IMR-90 (cell line): ENCODE measurements at regions of chr15 and their contacts with region 1.

Region 1: DNA sequence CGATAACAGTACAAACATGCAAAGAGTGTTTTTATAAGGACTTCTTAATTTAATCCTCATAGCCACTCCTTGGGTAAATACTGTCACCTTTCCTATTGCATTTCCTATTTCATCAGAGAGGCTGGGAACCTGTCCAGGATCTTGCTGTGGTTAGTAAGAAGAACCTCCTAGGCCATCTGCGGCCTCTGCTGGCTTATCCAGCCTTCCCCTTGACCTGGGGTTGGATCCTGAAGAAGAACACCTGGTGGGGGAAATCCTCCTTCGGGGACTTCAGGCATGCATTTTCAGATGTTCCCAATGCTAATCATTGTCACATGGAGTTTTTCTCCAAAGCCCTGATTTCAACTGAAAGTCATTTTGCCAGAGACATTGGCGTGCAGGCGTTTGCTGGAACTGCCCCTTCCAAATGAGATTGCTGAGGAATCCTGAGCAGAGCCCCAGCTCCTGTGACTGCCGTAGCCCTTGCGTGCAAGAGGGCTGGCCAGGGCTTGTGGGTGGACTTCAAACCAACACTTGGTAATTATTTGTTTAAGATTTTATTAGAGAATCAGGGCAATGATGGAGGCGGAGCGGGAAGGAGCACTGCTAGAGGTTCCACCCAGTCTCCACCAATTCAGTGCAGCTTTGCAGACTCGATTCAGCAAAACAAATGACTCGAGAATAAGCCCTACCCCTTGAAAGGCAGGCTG is 25.6 kb downstream of the GLDN start:
- DNase-seq: peak; percentile 52
- ATAC-seq: no peak
- H3K4me3 ChIP-seq: no peak overlapping the region
- H3K27ac ChIP-seq: peak overlapping the region; percentile 96; the same call in 1 of the 2 replicates
- H3K4me1 ChIP-seq: peaks cover 23% of the 10 kb centered on the region
- H3K27me3 ChIP-seq: peaks cover 21% of the 10 kb centered on the region
- CTCF ChIP-seq: no peak
- POLR2A ChIP-seq: no peak
- RAD21 ChIP-seq: no peak

Region 2: GRCh38 chr15:51218299-51218938 is 148.7 kb before region 1 on chr15:
- CTCF ChIA-PET with region 1: no interaction called
- POLR2A ChIA-PET with region 1: no interaction called
- dilution Hi-C with region 1: no loop called
- in situ Hi-C with region 1: no loop called
- intact Hi-C with region 1: no loop called
- DNase-seq: no peak
- ATAC-seq: no peak
- H3K4me3 ChIP-seq: no peak overlapping the region
- H3K27ac ChIP-seq: no peak overlapping the region
- H3K4me1 ChIP-seq: no peaks in the 10 kb centered on the region
- H3K27me3 ChIP-seq: peaks cover 17% of the 10 kb centered on the region
- CTCF ChIP-seq: no peak
- POLR2A ChIP-seq: no peak
- RAD21 ChIP-seq: no peak

Region 3: DNA sequence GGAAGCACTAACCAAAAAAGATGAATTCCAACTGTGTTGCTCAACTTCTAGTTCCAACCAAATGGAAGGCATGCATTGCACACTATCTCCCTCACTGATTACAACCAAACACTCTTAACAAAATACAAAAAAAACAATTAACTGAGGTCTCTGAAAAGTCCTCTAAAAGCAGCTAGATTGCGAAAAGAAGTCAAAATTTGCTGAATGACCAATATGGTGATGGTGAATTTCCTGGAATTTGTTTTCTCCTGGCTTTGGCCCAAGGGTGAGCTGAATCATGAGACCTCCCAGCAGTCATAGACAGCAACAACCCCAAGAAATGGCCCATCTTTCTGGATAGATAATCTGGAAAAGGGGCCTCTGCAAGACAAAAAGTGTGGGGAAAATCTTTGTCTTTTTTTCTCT is 57.0 kb before region 1 on chr15:
- CTCF ChIA-PET with region 1: no interaction called
- POLR2A ChIA-PET with region 1: no interaction called
- dilution Hi-C with region 1: no loop called
- in situ Hi-C with region 1: no loop called
- intact Hi-C with region 1: loop called (anchors 2 kb)
- DNase-seq: peak; percentile 20
- ATAC-seq: peak; percentile 24; the same call in 1 of the 2 replicates
- H3K4me3 ChIP-seq: no peak overlapping the region
- H3K27ac ChIP-seq: peak overlapping the region; percentile 78; the same call in 1 of the 2 replicates
- H3K4me1 ChIP-seq: peaks cover 16% of the 10 kb centered on the region; the same call in 1 of the 2 replicates
- H3K27me3 ChIP-seq: peaks cover 12% of the 10 kb centered on the region
- CTCF ChIP-seq: no peak
- POLR2A ChIP-seq: no peak
- RAD21 ChIP-seq: no peak

Region 4: DNA sequence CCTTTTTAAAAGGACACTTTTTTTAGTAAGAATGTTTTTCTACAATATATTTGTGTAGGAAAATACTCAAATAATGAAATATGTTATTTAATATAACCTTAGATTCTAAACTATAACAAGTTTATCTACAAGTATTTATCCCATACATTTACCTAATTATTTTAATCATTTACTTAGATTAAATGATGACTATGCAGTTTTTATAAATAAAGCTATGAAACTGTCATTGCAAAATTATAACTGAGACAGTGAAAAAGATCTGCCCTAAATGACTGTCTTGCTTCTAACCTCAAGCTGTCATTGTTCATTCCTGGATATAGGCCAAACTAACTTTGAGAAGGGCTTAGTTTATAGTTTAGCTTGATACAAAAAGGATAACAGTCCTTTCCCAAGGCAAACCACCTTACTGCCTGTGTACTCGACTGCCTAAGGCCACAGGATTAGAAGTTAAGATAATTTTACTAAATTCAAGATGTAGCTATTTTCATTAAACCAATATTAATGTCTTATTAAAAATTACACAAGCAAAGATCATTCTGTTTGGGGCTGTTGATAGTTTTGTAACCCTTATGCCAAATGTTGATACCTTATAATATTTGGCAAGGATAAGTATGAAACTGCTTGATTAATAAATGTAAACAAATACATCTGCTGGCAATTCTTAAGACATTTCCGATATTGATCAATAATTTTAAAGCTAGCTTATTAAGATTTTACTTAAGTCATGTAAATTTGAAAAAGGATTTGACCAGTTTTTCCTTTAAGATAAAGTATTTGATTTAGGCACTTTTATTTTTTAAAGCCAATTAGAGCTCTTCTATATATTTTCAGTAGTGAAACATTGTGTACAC is 58.6 kb after region 1 on chr15:
- CTCF ChIA-PET with region 1: no interaction called
- POLR2A ChIA-PET with region 1: no interaction called
- dilution Hi-C with region 1: no loop called
- in situ Hi-C with region 1: no loop called
- intact Hi-C with region 1: no loop called
- DNase-seq: no peak
- ATAC-seq: no peak
- H3K4me3 ChIP-seq: no peak overlapping the region
- H3K27ac ChIP-seq: no peak overlapping the region
- H3K4me1 ChIP-seq: 0 out of 2 replicates have a peak, but pooled peaks cover 3% of the 10 kb centered on the region
- H3K27me3 ChIP-seq: no peaks in the 10 kb centered on the region; the same call in 1 of the 2 replicates
- CTCF ChIP-seq: no peak
- POLR2A ChIP-seq: no peak
- RAD21 ChIP-seq: no peak

Region 5: GRCh38 chr15:52438047-52438446 is 1070.9 kb after region 1 on chr15:
- CTCF ChIA-PET with region 1: no interaction called
- POLR2A ChIA-PET with region 1: interaction called, 16 read pairs
- dilution Hi-C with region 1: no loop called
- in situ Hi-C with region 1: no loop called
- intact Hi-C with region 1: no loop called
- DNase-seq: peak; percentile 7
- ATAC-seq: no peak
- H3K4me3 ChIP-seq: no peak overlapping the region
- H3K27ac ChIP-seq: no peak overlapping the region
- H3K4me1 ChIP-seq: peaks cover 10% of the 10 kb centered on the region
- H3K27me3 ChIP-seq: no peaks in the 10 kb centered on the region
- CTCF ChIP-seq: no peak
- POLR2A ChIP-seq: no peak
- RAD21 ChIP-seq: no peak